HEK293 (cell line): ENCODE measurements at regions of chr6 and their contacts with region 1.

Region 1: DNA sequence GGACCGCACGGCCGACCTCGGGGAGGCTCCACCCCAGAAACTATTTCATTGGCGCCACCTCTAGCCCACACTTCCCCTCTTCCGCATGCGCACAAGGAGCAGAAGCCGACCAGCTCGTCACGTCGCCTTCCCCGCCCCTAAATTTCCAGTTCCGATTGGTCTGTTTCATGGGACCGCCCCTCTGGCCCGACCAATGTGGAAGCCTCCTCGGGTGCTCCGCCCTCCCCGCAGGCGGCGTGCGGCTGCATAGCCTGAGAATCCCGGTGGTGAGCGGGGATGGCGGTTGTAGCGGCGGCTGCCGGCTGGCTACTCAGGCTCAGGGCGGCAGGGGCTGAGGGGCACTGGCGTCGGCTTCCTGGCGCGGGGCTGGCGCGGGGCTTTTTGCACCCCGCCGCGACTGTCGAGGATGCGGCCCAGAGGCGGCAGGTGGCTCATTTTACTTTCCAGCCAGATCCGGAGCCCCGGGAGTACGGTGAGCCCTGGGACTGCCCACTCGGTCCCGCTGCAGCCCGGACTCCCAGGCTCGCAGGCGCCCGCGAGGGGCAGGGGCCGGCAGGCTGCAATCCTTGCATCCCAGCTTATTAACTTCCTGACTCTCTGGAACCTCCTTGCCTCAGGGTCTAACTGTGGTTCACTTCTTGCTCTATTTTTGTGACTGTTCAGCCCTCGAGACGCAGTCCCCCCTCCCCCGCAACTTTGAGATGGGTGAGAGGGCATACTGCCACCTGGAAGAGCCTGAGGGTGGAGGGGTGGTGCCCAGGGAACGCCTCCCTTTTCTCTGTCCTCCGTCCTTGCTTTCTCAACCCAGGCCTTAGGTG is at the start of gene BCKDHB:
- H3K4me3 ChIP-seq: peak within 1 kb of the TSS; percentile 88
- H3K27ac ChIP-seq: no peak within 1 kb of the TSS; the same call in 1 of the 2 replicates
- H3K4me1 ChIP-seq: peaks cover 2% of the 10 kb centered on the region; the same call in 1 of the 2 replicates
- CTCF ChIP-seq: peak; percentile 15; the same call in 1 of the 2 replicates

Region 2: DNA sequence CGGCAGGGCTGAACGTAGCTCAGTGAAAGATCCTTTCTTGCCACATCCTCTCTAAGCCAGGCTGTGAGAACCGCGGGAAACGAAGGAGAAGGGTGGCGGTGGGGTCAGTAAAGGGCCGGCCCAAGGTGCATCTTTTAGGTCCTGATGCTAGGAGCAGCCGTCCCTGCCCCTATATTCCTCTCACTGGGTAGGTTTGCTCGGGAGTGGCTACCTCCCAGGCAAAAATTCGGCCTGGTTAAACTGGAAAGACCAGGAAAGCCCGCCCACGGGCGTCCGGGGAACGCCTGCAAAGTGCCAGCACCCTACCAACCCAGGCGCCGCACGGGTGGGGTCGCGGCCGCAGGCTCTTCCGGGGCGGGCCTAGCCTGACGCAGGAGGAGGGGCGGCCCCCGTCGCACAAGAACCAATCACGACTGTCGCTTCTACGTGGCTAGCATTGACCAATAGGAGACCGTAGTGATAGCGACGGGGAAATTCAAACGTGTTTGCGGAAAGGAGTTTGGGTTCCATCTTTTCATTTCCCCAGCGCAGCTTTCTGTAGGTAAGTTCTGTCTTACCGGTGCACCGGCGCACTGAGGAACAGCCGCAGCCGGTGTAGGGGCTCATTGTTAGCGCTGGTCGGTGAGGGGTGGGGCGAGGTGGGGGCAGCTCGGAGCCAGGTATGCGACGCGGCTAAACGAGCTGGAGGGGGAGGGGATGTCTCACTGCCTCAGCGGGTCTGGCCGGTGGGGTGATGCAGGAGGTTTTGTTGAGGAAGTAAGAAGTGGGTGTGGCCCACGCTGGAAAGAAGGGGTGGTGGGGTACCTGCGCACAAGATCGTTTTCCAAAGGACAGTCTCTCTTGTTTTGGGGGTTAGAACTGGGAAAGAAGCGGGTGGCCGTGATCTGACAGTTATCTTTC is 102.2 kb before region 1 on chr6 and contains the start of gene TTK:
- CTCF ChIA-PET with region 1: no interaction called
- POLR2A ChIA-PET with region 1: interaction called, 23 read pairs
- H3K4me3 ChIP-seq: peak within 1 kb of the TSS; percentile 78
- H3K27ac ChIP-seq: peak within 1 kb of the TSS; percentile 54
- H3K4me1 ChIP-seq: no peaks in the 10 kb centered on the region
- CTCF ChIP-seq: no peak

Region 3: DNA sequence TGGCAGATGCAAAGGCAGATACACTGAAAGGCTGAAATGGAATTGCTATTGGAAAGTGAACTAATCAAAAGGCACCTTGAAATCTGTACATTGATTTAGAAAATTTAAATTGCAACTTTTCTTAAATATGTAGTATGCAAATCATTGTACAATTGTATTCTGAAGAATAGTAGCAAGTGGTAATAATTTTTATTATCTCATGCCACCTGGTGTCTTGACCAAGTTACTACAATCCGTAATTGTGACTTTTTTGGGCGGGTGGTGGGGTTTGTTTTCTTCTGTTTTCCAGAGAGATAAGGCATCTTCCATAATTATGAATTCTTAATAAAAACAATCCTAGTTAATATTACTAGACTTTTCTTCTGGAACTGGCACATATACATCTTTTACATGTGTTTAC is 12.6 kb before region 1 on chr6:
- CTCF ChIA-PET with region 1: interaction called, 24 read pairs
- POLR2A ChIA-PET with region 1: interaction called, 6 read pairs
- H3K4me3 ChIP-seq: no peak overlapping the region
- H3K27ac ChIP-seq: no peak overlapping the region
- H3K4me1 ChIP-seq: no peaks in the 10 kb centered on the region
- CTCF ChIP-seq: no peak

Region 4: DNA sequence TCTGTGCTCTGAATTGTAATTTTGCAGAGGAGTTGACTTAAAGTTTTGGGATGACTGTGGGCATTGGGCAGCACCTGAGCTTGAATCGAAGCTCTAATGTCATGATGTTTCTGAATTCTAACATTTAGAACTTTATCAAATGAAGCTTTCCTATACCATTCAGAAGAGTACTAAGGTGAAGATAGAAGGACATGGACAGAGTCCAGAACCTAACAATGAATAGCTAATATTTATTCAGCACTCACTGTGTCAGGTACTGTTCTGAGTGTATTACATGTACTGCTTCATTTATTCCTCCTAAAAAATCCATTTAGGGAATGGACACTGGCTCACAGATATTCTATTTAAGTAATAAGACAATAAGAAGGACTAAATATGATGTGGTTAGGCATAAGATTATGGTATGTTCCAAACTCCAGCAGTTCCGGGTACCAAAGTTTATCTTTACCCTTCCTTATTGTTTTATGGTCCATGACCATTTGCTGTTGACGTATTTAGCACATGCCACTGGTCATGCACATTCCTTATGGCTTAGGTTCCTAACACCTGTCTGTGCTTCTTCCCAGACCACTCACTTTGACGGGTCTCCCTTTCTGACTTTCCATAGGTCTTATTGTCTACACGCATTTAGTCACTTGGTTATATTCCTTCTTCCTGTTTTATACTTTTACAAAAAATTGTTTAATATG is 20.2 kb after region 1 on chr6:
- CTCF ChIA-PET with region 1: no interaction called
- POLR2A ChIA-PET with region 1: interaction called, 26 read pairs
- H3K4me3 ChIP-seq: no peak overlapping the region
- H3K27ac ChIP-seq: no peak overlapping the region
- H3K4me1 ChIP-seq: 0 out of 2 replicates have a peak, but pooled peaks cover 3% of the 10 kb centered on the region
- CTCF ChIP-seq: no peak